Endothelial cell of umbilical vein (primary cell): ENCODE measurements at regions of chr20 and their contacts with region 1.

Region 1: DNA sequence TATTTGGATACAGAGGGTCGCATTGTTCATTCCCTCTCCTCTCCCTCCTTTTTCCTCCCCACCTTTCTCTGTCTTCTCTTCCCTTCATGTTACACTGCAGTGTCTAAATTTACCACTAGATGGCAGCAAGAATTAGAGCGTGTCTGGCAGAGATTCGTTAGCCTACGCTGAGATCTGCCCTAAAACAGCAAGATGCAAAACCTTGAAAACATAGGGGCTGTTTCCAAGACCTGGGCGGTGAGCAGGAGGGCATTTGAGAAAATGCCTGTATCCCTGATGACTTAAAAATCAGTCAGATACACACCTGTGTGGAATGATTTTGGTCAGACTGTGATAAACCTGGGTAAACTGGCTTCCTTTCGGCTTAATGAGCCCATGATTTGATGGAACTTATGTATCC is 101.5 kb upstream of the ISM1 start:
- DNase-seq: peak; percentile 64
- H3K4me3 ChIP-seq: no peak overlapping the region
- H3K27ac ChIP-seq: no peak overlapping the region
- H3K4me1 ChIP-seq: no peaks in the 10 kb centered on the region
- H3K27me3 ChIP-seq: no peaks in the 10 kb centered on the region
- CTCF ChIP-seq: peak; percentile 68 to 76
- POLR2A ChIP-seq: no peak

Region 2: GRCh38 chr20:12775041-12775440 is 344.5 kb before region 1 on chr20:
- CTCF ChIA-PET with region 1: no interaction called
- POLR2A ChIA-PET with region 1: no interaction called
- dilution Hi-C with region 1: no loop called
- intact Hi-C with region 1: no loop called
- DNase-seq: no peak
- H3K4me3 ChIP-seq: no peak overlapping the region
- H3K27ac ChIP-seq: no peak overlapping the region
- H3K4me1 ChIP-seq: no peaks in the 10 kb centered on the region
- H3K27me3 ChIP-seq: no peaks in the 10 kb centered on the region
- CTCF ChIP-seq: no peak
- POLR2A ChIP-seq: no peak

Region 3: DNA sequence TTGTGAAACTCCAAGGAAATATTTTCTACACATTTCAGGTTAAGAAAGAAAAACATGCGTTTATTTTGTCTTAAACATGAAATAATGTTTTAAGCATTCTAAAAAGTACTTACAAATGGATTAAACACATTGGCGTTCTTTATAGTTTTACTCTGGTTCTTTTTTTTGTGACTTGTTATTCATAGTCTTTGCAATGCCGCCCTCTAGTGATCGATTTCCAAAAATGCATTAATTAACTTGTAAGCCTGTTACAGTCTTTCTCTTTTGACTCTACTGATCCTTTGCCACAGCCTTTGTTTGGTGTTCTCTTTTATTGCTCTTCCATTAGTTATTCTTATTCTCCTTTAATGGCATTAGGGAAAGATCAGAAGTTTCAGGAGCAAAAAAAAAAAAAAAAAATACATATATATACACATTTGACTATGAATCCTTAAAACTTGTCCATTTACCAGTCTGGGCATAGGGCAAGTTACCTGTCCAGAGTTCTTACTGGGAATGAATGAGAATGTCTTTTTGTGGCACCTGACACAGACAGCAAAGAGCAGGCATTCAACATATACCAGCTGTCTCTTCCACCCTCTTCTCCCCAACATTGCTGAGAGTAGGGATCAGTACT is 935.7 kb after region 1 on chr20:
- CTCF ChIA-PET with region 1: interaction called, 6 read pairs
- POLR2A ChIA-PET with region 1: no interaction called
- dilution Hi-C with region 1: no loop called
- intact Hi-C with region 1: loop called (anchors 5 kb)
- DNase-seq: peak; percentile 68
- H3K4me3 ChIP-seq: no peak overlapping the region
- H3K27ac ChIP-seq: no peak overlapping the region
- H3K4me1 ChIP-seq: no peaks in the 10 kb centered on the region
- H3K27me3 ChIP-seq: no peaks in the 10 kb centered on the region
- CTCF ChIP-seq: peak; percentile 37 to 42
- POLR2A ChIP-seq: no peak